ENCODE measurements at regions of chr13 and their contacts with region 1.

Region 1: GRCh38 chr13:42574435-42575311 is 721 bp downstream of the TNFSF11 start:
- DNase-seq: peak; percentile 81
- ATAC-seq: peak; percentile 88
- H3K4me3 Mint-ChIP-seq: peak overlapping the region; percentile 74
- H3K27ac Mint-ChIP-seq: peak overlapping the region; percentile 47
- H3K4me1 Mint-ChIP-seq: peaks cover 19% of the 10 kb centered on the region
- H3K27me3 Mint-ChIP-seq: peaks cover 35% of the 10 kb centered on the region
- CTCF ChIP-seq: no peak

Region 2: DNA sequence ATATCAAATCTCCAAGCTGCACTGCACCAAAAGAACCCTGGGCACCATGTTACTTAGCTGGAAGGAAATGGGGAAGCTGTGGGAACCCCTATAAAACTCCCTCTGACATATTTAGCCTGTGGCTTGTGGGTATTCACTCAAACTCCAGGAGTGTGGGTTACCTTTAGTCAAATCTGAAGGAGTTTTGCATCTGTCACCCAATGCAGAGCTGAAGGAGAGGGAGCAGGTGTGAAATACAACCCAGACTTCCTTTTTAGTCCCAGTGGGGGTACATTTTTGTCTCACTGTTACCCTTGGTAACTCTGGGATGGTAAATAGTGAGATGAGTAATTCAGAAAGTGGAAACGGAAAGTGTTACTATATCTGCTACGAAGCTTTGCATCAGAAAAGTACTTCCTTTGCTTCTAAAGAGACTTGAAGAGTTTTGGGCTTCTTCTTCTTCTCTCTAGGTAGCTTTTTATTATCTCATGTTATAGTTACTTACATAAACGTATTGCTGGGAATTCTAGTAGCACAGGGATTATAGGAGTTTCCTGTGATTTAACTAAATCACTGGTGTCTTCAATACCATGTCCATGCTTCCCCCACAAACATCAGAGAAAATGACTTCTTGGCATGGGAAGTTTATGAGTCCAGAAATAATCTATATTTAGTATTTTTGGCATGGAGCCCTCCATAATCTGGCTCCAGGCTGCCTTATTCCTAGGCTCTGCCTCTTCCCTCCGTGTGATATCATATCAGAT is 196.9 kb before region 1 on chr13:
- CTCF ChIA-PET with region 1: no interaction called
- POLR2A ChIA-PET with region 1: no interaction called
- intact Hi-C with region 1: loop called (anchors 10 kb)
- DNase-seq: peak; percentile 58
- ATAC-seq: peak; percentile 82
- H3K4me3 Mint-ChIP-seq: no peak overlapping the region
- H3K27ac Mint-ChIP-seq: peak overlapping the region; percentile 95
- H3K4me1 Mint-ChIP-seq: peaks cover 69% of the 10 kb centered on the region
- H3K27me3 Mint-ChIP-seq: no peaks in the 10 kb centered on the region
- CTCF ChIP-seq: no peak

Region 3: GRCh38 chr13:42497798-42498197 is 76.9 kb before region 1 on chr13:
- CTCF ChIA-PET with region 1: no interaction called
- POLR2A ChIA-PET with region 1: no interaction called
- intact Hi-C with region 1: loop called (anchors 5 kb)
- DNase-seq: peak; percentile 53
- ATAC-seq: peak; percentile 86
- H3K4me3 Mint-ChIP-seq: no peak overlapping the region
- H3K27ac Mint-ChIP-seq: peak overlapping the region; percentile 44
- H3K4me1 Mint-ChIP-seq: peaks cover 46% of the 10 kb centered on the region
- H3K27me3 Mint-ChIP-seq: no peaks in the 10 kb centered on the region
- CTCF ChIP-seq: no peak

Measured in activated CD8-positive, alpha-beta T cell treated with anti-CD3 and anti-CD28 coated beads for 36 hours (primary cell).